Left ventricle myocardium superior (tissue), 1 donor: ENCODE measurements at regions of chr22 and their contacts with region 1.

Region 1: DNA sequence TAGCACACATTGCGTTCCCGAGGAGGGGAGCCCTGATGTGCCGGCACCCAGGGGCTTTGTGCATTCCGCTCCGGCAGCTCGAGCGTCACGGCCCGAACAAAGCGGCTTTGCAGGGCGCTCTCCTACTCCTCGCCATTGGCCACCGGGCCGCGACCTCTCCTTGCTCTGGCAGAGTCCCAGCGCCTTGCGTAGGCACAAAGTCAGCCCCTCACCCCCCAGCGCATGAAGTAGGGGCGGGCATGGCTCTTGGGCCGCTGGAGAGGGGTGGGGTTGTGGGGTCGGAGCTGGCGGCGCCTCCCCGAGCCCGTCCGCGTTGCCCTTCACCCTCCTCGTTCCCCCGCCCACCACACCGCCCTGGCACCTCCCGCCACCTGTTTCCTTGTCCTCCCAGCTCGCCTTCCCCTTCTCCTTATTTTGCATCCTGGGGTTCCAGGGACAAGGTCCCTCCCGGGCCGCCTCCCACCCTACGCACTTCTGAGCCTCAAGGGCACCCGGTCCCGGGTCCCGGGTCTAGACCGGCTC is 753 bp upstream of the PPARA start:
- DNase-seq: peak; percentile 82
- ATAC-seq: peak; percentile 69

Region 2: DNA sequence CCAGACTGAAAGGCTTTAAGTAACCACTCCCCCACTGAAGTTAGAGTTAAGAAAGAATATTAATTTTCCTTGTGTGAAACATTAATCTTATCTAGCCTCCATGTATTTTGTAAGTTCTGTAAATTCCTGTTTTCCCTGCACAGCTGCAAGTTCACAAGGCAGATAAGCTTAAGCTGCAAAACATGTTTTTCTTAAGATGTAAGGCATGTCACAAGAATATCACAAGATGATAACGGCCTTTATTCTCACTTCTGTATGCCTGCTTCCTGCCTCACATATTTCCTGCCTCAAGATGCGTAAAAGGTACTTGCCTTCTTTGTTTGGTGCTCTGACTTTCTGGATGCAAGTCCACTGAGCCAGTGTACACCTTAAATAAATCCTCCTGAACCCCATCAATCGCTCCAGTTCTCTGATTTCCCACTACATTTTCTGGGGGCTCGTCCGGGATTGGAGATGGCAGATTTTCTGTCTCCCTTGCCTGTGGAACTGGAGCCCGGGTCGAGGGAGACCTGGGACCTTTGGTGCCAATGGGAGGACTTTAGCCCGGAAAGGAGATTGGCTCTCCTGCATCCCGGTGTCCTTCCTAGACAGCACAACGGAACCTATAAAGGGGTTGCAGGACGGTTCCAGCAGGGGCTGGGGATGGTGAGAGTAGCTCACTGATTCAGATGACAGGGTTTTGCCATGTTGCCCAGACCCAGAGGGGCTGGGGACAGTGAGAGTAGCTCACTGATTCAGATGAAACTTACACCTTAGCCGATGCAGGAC is 31.0 kb after region 1 on chr22:
- intact Hi-C with region 1: no loop called
- DNase-seq: no peak
- ATAC-seq: no peak

Region 3: DNA sequence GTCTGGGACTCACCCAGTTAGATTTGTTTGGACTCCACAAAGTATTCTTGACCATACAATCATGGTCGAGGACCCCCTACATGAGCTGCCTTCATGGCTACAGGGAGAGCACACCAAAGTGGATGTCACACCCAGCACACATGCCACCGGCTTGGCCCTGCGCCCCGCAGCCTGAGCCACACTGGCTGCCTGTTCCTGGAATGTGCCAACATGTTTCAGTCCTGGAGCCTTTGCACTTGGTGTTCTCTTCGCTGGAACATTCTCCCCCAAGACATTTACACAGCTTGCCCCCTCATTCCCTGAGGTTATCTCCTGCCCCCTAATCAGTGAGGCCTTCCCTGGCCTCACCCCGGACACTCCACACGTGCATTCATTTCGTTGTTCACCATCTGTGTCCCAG is 46.7 kb after region 1 on chr22:
- intact Hi-C with region 1: no loop called
- DNase-seq: peak; percentile 91
- ATAC-seq: peak; percentile 95

Region 4: DNA sequence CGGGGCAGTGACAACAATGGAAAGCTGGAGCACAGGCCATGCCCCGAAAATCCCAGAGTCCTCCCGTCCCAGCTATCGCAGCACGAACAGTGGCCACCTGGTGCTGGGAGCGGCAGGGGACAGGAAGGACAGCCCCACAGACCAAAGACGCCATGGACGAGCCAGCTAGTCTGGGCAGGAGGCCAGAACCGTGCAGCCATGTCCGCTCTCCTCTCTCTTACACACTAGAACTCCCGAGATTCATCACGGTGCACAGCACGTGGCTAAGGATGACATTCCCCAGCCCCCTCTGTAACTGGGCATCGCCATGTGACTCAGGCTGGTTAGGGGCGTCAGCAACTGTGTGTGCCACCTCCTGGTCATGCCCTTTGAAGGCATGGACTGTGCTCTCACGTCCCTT is 95.9 kb after region 1 on chr22:
- intact Hi-C with region 1: loop called (anchors 10 kb)
- DNase-seq: peak; percentile 85
- ATAC-seq: peak; percentile 53